ENCODE measurements at regions of chr5 and their contacts with region 1.

Region 1: GRCh38 chr5:149035372-149035790 is 27.5 kb downstream of the SH3TC2 start:
- DNase-seq: no peak
- H3K4me3 ChIP-seq: no peak overlapping the region
- H3K27me3 ChIP-seq: no peaks in the 10 kb centered on the region
- CTCF ChIP-seq: peak; percentile 95

Region 2: GRCh38 chr5:148820461-148821395 is 214.7 kb before region 1 on chr5:
- CTCF ChIA-PET with region 1: interaction called, 17 read pairs
- POLR2A ChIA-PET with region 1: no interaction called
- DNase-seq: no peak
- H3K4me3 ChIP-seq: no peak overlapping the region
- H3K27me3 ChIP-seq: no peaks in the 10 kb centered on the region
- CTCF ChIP-seq: peak; percentile 73

Region 3: DNA sequence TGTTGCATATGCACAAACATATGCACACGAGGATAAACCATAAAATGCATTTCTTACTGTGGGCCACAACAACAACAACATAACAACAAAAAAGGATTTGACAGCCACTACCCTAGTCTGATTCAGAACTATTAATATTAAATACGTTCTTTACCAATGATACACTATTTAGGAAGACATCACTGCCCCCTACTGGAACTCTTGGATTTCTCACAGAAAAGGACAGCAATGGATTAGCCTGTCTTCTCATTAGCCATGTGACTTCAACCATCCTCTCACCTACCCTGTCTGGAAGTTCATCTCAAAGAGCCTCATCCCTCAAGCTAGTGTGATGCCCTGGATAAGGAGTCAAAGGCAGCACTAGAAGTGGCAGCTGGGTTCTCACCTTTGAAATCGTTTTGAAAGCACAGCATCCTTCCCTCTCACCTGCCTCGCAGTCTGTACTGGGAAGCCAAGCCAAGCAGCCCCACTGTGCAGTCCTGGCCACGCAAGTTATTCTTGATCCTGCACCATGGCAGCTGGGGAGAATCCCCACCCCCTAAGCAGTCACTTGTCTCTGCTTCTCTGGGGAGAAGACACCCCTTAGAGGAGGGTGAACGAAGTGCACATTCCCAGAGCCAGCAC is 37.1 kb before region 1 on chr5:
- CTCF ChIA-PET with region 1: interaction called, 18 read pairs
- POLR2A ChIA-PET with region 1: no interaction called
- DNase-seq: no peak
- H3K4me3 ChIP-seq: no peak overlapping the region
- H3K27me3 ChIP-seq: no peaks in the 10 kb centered on the region
- CTCF ChIP-seq: peak; percentile 61

Region 4: GRCh38 chr5:149018909-149019443 is 16.4 kb before region 1 on chr5:
- CTCF ChIA-PET with region 1: interaction called, 19 read pairs
- POLR2A ChIA-PET with region 1: no interaction called
- DNase-seq: no peak
- H3K4me3 ChIP-seq: no peak overlapping the region
- H3K27me3 ChIP-seq: no peaks in the 10 kb centered on the region
- CTCF ChIP-seq: no peak

Region 5: DNA sequence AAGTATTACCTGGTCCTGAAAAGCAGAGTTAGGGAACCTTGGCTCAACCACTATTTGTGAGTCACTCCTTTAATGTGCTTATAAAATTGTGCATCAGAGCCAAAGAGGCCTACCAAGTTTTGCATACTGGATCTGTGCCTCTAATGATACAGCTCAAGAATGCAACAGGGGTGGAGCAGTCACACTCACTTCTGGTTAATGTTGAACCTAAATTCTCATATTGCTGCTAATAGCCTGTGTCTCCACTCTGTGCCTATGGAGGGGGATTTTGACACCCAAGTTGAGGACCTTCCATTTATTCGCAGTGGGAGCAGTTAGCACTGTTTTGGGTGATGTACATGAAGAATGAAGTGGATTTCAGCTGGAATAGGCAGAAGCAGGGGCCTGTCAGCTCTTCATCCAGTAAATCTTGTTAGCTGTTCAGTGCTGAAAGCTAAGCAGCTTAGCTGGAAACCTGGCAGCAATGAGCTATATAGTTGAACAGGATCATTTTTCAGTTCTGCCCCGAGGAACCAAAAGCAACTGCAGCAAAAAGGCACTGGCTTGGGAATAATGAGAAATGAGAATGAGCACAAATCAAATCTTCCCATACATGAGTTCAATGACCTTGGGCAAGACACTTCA is 17.8 kb after region 1 on chr5:
- CTCF ChIA-PET with region 1: interaction called, 53 read pairs
- POLR2A ChIA-PET with region 1: interaction called, 3 read pairs
- DNase-seq: peak; percentile 61
- H3K4me3 ChIP-seq: no peak overlapping the region
- H3K27me3 ChIP-seq: no peaks in the 10 kb centered on the region
- CTCF ChIP-seq: no peak

Region 6: GRCh38 chr5:149114403-149115312 is 79.3 kb after region 1 on chr5:
- CTCF ChIA-PET with region 1: interaction called, 49 read pairs
- POLR2A ChIA-PET with region 1: no interaction called
- DNase-seq: no peak
- H3K4me3 ChIP-seq: no peak overlapping the region
- H3K27me3 ChIP-seq: no peaks in the 10 kb centered on the region
- CTCF ChIP-seq: peak; percentile 87

Region 7: DNA sequence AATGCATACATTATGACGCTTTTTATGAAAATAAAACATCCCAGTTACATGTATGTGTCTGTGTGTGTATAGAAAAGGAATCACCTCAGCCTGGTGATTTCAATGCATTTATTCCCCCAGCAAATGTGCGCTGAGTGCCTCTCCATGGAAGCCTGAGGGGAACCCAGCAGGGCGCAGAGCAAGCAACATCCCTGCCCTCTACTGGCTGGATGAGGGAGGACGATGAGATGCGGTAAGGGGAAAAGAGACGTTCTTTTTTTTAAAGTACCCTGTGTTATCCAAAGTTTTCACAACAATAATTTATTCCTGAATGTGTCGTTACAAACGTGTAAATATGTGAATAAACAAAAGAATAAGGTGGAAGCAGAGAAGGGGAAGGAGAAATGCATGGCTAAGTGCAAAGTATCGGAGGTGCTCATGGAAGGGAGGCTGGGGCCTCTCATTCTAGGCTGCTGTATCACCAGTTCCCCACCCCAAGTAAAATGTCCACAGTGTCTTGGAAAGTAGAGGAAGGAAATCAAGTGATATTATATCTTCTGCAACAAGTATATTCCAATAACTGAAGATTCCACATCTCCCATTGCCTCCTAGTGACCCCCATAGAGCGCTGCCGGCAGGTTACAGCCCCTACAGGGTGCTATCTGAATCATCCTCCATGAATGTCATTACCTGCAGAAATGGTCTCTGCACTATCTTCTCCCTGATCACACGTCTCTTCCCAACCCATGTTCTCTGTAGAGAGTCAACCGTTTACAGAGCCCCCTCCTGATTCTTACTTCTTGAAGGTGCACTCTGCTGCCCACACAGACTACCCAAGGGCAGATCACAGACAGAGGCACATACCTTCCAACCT is 92.9 kb after region 1 on chr5:
- CTCF ChIA-PET with region 1: no interaction called
- POLR2A ChIA-PET with region 1: no interaction called
- DNase-seq: no peak
- H3K4me3 ChIP-seq: no peak overlapping the region
- H3K27me3 ChIP-seq: no peaks in the 10 kb centered on the region
- CTCF ChIP-seq: peak; percentile 94

Measured in BJ (cell line).